Ascending aorta (tissue), 2 donors: ENCODE measurements at regions of chr17 and their contacts with region 1.

Region 1: GRCh38 chr17:14069251-14070021 is at the start of gene COX10:
- DNase-seq: peak; percentile 41 to 90
- H3K4me3 ChIP-seq: peak within 1 kb of the TSS; percentile 90 to 92
- H3K27ac ChIP-seq: peak within 1 kb of the TSS; percentile 55 to 71
- H3K4me1 ChIP-seq: peaks cover 0 to 15% of the 10 kb centered on the region in 2 donors
- H3K27me3 ChIP-seq: no peaks in the 10 kb centered on the region
- CTCF ChIP-seq: no peak
- total RNA-seq, gene COX10: 6.4 TPM

Region 2: DNA sequence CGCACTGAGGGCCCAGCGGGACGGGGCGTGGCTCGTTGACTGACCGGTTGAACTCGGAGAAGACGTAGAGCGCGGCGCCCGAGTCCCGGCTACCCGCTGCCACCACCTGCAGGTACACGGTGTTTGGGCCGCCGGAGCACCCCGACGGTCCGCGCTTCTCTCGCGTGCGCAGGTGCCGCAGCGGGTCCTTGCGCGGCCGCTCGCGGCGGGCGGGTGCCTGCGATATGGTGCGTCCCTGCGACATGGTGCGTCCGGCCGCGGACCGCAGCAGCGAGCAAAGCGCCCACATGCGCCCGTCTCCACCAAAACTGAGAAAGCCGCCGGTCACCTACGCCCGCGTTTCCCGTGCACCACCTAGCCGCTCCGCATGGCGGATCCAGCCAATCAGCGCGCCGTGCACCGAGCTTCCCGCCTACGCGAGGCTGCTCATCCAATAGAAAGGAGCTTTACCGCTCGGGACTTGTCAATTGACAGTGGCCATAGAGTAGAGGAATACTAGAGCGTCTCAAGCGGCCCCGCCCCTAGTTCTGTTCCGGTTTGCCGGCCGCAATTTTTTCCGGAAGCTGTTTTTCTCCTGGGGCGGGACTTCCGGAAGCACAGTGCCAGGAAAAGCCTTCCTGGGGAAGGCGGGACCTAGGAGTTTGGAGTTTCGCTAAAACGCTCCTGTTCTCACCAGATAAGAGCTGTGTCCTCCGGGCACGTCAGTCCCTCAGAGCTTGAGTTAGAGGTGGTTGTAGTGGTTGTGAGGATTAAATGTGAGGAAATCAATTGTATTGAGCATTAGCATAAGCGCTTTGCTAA is 1051.6 kb before region 1 on chr17 and contains the start of gene ELAC2:
- intact Hi-C with region 1: loop called (anchors 10 kb)
- DNase-seq: peak; percentile 93 to 99
- H3K4me3 ChIP-seq: peak within 1 kb of the TSS; percentile 98 to 99
- H3K27ac ChIP-seq: peak within 1 kb of the TSS; percentile 78 to 83
- H3K4me1 ChIP-seq: peaks cover 0 to 14% of the 10 kb centered on the region in 2 donors
- H3K27me3 ChIP-seq: no peaks in the 10 kb centered on the region
- CTCF ChIP-seq: peak in 1 of 3 experiments; percentile 16
- total RNA-seq, gene ELAC2: 190 TPM

Region 3: DNA sequence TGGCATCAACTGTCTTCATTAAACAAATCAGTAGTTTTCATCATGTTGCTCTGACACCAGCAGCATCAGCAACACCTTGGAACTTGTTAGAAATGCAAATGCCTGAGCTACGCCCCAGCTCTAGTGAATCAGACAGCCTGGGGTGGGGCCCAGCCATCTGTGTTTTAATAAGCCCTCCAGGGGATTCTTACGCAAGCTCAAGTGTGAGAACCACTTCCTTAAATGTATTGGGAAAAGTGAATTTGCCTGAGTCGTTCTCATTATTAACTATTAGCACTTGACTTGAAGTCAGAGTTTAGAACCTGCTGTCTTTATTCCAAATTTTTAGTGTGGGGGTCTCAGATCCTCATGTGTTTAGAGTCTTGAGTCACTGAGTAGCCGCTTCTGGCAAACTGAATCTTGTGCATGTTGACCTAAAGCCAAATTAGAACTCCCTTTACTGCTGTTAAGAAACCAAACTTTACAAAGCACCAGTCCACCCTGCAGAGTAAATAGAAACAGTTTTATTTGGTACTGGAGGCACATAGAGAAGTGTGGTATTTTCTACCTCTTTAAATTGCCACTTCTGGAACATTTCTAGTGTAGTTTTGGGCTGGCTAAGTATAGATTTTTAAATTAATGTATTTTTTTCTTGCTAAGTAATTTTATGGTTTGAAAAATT is 137.5 kb before region 1 on chr17:
- intact Hi-C with region 1: loop called (anchors 10 kb)
- DNase-seq: peak; percentile 43 to 83
- H3K4me3 ChIP-seq: no peak overlapping the region
- H3K27ac ChIP-seq: peak overlapping the region in 1 of 2 donors; percentile 35
- H3K4me1 ChIP-seq: peaks cover 0 to 12% of the 10 kb centered on the region in 2 donors
- H3K27me3 ChIP-seq: no peaks in the 10 kb centered on the region
- CTCF ChIP-seq: no peak

Region 4: GRCh38 chr17:14019186-14019956 is 50.1 kb before region 1 on chr17:
- intact Hi-C with region 1: loop called (anchors 10 kb)
- DNase-seq: no peak
- H3K4me3 ChIP-seq: no peak overlapping the region
- H3K27ac ChIP-seq: no peak overlapping the region
- H3K4me1 ChIP-seq: peaks cover 0 to 5% of the 10 kb centered on the region in 2 donors
- H3K27me3 ChIP-seq: no peaks in the 10 kb centered on the region
- CTCF ChIP-seq: no peak

Region 5: DNA sequence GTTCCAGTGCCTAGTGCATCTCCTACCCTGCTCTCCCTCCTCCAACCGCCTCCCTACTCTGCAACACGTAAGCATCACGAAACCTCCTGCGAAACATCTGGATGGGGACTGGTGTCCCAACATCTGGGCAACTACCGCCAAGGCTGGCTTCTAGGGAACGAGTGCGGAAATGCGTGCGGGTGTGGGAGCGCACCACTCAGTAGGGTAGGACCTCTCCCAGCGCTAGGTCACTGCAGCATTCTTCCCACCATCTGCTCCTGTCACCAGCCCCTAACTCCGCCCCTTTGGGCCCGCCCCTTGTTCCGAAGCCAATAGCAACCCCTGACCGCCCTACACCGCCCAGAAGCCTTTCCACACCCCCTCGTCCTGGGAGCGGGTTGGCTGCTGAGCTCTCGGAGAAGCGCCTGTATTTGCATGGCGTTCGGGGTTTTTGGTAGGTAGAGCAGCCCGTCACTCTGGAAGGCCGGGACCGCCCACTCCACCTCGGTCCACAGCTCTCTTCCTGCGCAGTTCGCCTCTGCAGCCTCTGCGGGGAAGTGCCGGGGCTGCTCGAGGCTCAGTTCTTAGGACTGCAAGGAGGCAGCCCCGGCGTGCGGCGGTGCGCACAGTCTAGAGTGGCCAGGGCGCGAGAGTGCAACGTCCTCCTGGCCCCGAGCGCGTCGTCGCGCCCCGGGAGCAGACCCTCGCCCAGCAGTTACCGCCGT is 231.3 kb after region 1 on chr17 and contains the start of gene HS3ST3B1:
- intact Hi-C with region 1: loop called (anchors 10 kb)
- DNase-seq: peak; percentile 95 to 97
- H3K4me3 ChIP-seq: peak within 1 kb of the TSS; percentile 80 to 86
- H3K27ac ChIP-seq: peak within 1 kb of the TSS; percentile 51 to 65
- H3K4me1 ChIP-seq: peaks cover 14 to 22% of the 10 kb centered on the region in 2 donors
- H3K27me3 ChIP-seq: peaks cover 18% of the 10 kb centered on the region
- CTCF ChIP-seq: no peak
- total RNA-seq, gene HS3ST3B1: 14.6 TPM